B cell (primary cell): ENCODE measurements at regions of chr3 and their contacts with region 1.

Region 1: DNA sequence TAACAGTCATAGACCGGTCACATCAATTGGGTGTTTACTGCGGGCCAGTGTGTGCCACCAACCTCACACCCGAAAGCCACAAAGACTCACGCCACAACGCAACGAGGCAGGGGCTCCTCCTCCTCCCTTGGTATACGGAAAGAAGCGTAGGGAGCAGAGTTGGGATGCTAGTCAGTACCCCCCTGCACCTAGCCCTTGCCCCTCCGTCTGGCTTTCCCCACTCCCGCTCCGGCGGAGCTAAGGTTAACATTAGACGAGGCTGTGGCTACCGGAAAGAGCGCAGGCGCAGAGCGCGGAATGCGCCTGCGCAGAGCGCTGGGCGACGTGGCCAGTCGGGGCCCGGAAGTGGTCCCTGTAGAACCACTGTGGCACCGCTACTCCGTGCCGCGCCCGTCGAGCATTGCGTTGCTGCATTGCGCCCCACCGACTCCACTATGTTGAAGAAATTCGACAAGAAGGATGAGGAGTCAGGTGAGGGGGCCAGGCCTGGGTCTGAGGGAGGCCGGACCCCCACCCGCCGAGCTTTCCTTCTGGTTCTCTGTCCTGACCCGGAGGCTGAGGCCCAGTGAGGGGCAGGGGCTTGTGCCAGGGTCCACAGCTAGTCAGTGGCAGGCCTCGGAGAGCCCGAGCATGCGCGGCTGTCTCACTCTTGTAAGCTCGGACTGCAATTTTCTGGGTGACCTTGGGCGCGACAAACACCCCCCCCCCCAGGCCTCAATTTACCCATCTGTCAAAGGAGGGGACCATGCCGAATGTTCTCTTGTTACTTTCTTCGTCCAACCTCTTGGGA is at the start of gene COPG1:
- DNase-seq: peak; percentile 92
- ATAC-seq: peak; percentile 85
- H3K4me3 ChIP-seq: peak within 1 kb of the TSS; percentile 88 to 99 (median 95)
- H3K4me3 Mint-ChIP-seq: peak within 1 kb of the TSS; percentile 95
- H3K27ac ChIP-seq: peak within 1 kb of the TSS; percentile 64 to 79
- H3K27ac Mint-ChIP-seq: peak within 1 kb of the TSS; percentile 94
- H3K4me1 ChIP-seq: peaks cover 16 to 29% of the 10 kb centered on the region in 2 donors
- H3K4me1 Mint-ChIP-seq: peaks cover 26% of the 10 kb centered on the region
- H3K27me3 ChIP-seq: no peaks in the 10 kb centered on the region
- H3K27me3 Mint-ChIP-seq: no peaks in the 10 kb centered on the region
- CTCF ChIP-seq: no peak
- total RNA-seq, gene COPG1: 85.9 and 87.6 TPM in 2 replicates

Region 2: DNA sequence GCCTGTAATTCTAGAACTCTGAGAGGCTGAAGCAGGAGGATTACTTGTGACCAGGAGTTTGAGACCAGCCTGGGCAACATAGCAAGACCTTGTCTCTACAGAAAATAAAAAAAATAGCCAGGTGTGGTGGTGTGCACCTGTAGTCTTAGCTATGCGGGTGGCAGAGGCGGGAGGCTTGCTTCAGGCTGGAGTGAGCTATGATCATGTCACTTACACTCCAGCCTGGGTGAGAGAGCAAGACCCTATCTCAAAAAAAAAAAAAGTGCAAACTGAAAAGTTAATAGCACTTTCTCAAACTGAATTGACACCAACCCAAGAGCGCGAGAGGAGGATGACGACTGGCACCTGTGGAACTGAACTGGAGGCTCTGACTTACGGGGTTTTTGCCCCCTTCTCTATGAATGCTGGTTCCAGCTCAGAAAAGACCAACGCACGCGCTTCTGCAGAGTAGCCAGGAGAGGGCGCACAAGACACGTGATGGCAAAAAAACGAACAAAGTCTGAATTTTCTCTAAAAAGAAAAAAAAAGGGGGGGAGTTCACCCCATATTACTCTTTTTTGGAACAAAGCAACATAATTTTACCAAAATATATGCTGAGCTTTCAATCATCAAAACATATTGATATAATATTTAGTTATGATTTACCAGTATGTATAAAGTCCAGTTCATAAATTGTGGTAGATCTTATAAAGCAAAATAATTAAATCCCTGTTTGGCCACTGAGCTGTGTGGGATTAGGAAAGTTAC is 279.3 kb before region 1 on chr3:
- CTCF ChIA-PET with region 1: interaction called, 128 read pairs
- POLR2A ChIA-PET with region 1: interaction called, 5 read pairs
- intact Hi-C with region 1: loop called (anchors 1 kb)
- DNase-seq: peak; percentile 80
- ATAC-seq: peak; percentile 64
- H3K4me3 ChIP-seq: no peak overlapping the region
- H3K4me3 Mint-ChIP-seq: no peak overlapping the region
- H3K27ac ChIP-seq: no peak overlapping the region
- H3K27ac Mint-ChIP-seq: no peak overlapping the region
- H3K4me1 ChIP-seq: peaks cover 14 to 15% of the 10 kb centered on the region in 2 donors
- H3K4me1 Mint-ChIP-seq: peaks cover 11% of the 10 kb centered on the region
- H3K27me3 ChIP-seq: no peaks in the 10 kb centered on the region
- H3K27me3 Mint-ChIP-seq: peaks cover 4% of the 10 kb centered on the region
- CTCF ChIP-seq: peak; percentile 97

Region 3: GRCh38 chr3:128992926-128993460 is 256.5 kb before region 1 on chr3:
- CTCF ChIA-PET with region 1: no interaction called
- POLR2A ChIA-PET with region 1: no interaction called
- intact Hi-C with region 1: no loop called
- DNase-seq: no peak
- ATAC-seq: no peak
- H3K4me3 ChIP-seq: no peak overlapping the region
- H3K4me3 Mint-ChIP-seq: peak overlapping the region; percentile 73
- H3K27ac ChIP-seq: no peak overlapping the region
- H3K27ac Mint-ChIP-seq: peak overlapping the region; percentile 37
- H3K4me1 ChIP-seq: peaks cover 20 to 27% of the 10 kb centered on the region in 2 donors
- H3K4me1 Mint-ChIP-seq: peaks cover 16% of the 10 kb centered on the region
- H3K27me3 ChIP-seq: peaks cover 0 to 26% (median 9%) of the 10 kb centered on the region in 4 experiments
- H3K27me3 Mint-ChIP-seq: peaks cover 8% of the 10 kb centered on the region
- CTCF ChIP-seq: no peak

Region 4: GRCh38 chr3:129026728-129027543 is 222.5 kb before region 1 on chr3:
- CTCF ChIA-PET with region 1: interaction called, 12 read pairs
- POLR2A ChIA-PET with region 1: no interaction called
- intact Hi-C with region 1: loop called (anchors 1 kb)
- DNase-seq: peak; percentile 95
- ATAC-seq: peak; percentile 98
- H3K4me3 ChIP-seq: peak overlapping the region; percentile 30 to 71 (median 61)
- H3K4me3 Mint-ChIP-seq: peak overlapping the region; percentile 91
- H3K27ac ChIP-seq: peak overlapping the region; percentile 74 to 83
- H3K27ac Mint-ChIP-seq: peak overlapping the region; percentile 95
- H3K4me1 ChIP-seq: peaks cover 13 to 15% of the 10 kb centered on the region in 2 donors
- H3K4me1 Mint-ChIP-seq: peaks cover 22% of the 10 kb centered on the region
- H3K27me3 ChIP-seq: peaks cover 0 to 6% (median 0%) of the 10 kb centered on the region in 4 experiments
- H3K27me3 Mint-ChIP-seq: peaks cover 3% of the 10 kb centered on the region
- CTCF ChIP-seq: peak; percentile 91

Region 5: DNA sequence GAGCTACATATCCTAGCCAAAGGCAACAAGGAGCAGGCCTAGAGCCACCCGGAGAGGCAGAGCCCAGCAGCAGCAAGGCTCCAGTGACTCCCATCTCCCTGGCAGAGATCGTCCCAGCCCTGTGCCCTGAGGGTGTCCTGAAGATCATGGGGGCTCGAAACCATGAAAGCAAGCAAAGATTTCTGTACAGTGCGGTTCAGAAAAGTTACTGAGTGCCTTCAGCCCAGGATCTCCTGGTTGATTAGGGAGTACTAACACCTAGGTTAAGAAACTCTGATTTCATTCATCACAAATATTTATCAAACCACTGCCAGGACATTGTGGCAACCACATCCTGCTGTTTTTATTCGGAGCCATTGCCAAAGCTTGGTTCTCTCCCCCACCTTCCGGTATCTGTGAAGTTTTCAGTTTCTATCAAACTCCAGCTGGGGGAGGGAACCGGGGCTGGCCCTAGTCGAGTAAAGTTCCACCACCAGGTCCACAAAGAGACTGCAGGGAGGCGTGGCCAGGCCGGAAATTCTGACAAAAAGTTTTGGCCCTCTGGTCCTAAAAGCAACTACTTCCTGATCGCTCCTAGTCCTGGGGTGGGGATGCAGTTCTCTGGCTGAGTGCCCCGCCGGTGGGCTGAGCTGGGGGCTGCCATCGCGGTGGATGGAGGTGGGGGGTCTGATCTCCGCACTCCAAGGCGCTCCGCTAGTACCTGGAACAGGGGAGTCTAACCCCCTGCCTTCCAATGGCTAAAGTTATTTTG is 129.0 kb before region 1 on chr3:
- CTCF ChIA-PET with region 1: interaction called, 26 read pairs
- POLR2A ChIA-PET with region 1: interaction called, 7 read pairs
- intact Hi-C with region 1: loop called (anchors 5 kb)
- DNase-seq: peak; percentile 93
- ATAC-seq: peak; percentile 61
- H3K4me3 ChIP-seq: peak overlapping the region; percentile 68 to 81 (median 76)
- H3K4me3 Mint-ChIP-seq: peak overlapping the region; percentile 88
- H3K27ac ChIP-seq: peak overlapping the region; percentile 61 to 62
- H3K27ac Mint-ChIP-seq: peak overlapping the region; percentile 84
- H3K4me1 ChIP-seq: peaks cover 42 to 46% of the 10 kb centered on the region in 2 donors
- H3K4me1 Mint-ChIP-seq: peaks cover 53% of the 10 kb centered on the region
- H3K27me3 ChIP-seq: no peaks in the 10 kb centered on the region
- H3K27me3 Mint-ChIP-seq: no peaks in the 10 kb centered on the region
- CTCF ChIP-seq: peak; percentile 30

Region 6: DNA sequence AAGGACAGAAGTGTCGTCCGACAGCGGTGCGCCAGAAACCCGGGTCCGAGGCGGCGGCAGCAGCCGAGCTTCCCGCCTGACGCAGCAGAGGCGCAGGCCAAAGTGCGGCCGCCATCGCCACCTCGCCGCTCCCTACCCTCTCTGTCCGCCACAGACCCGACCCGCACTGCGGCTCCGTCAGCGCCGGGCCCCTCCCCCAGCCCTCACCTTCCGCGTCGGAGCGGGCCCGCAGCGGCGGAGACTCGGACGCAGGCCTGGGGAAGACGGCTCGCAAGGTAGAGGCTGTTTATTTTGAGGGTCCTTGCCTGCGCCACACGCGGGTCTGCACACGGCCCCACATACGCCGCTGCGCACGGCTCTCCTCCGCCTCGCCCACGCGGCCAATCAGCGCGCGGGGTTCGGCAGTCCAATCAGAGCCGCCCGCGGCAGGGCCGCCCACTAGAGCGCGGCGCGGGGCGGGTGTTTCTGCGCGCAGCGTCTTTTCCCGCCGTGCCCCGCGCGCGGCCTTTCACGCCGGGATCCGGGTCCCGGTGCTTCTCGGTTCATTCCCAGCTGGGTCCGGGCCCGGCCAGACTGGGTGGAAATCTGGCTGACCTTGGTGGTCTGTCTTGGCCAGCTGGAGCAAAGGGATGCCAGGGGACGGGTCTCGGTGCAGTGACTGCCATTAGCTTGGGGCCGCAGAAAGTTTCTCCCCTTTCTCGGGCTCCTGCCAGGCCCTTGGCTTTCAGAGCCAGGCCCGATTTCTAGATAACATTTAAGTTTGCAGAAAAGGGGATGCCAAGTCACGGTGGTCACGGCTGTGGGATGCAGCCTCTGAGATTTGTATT is 65.7 kb before region 1 on chr3 and contains the start of gene CNBP:
- CTCF ChIA-PET with region 1: interaction called, 39 read pairs
- POLR2A ChIA-PET with region 1: interaction called, 8 read pairs
- intact Hi-C with region 1: loop called (anchors 1 kb)
- DNase-seq: peak; percentile 95
- ATAC-seq: peak; percentile 97
- H3K4me3 ChIP-seq: peak within 1 kb of the TSS; percentile 71 to 100 (median 98)
- H3K4me3 Mint-ChIP-seq: peak within 1 kb of the TSS; percentile 89
- H3K27ac ChIP-seq: peak within 1 kb of the TSS; percentile 90 to 92
- H3K27ac Mint-ChIP-seq: peak within 1 kb of the TSS; percentile 99
- H3K4me1 ChIP-seq: peaks cover 23 to 52% of the 10 kb centered on the region in 2 donors
- H3K4me1 Mint-ChIP-seq: peaks cover 44% of the 10 kb centered on the region
- H3K27me3 ChIP-seq: no peaks in the 10 kb centered on the region
- H3K27me3 Mint-ChIP-seq: no peaks in the 10 kb centered on the region
- CTCF ChIP-seq: no peak
- total RNA-seq, gene CNBP: 294 and 304 TPM in 2 replicates

Region 7: GRCh38 chr3:129233538-129233937 is 15.9 kb before region 1 on chr3:
- CTCF ChIA-PET with region 1: interaction called, 98 read pairs
- POLR2A ChIA-PET with region 1: interaction called, 18 read pairs
- intact Hi-C with region 1: loop called (anchors 1 kb)
- DNase-seq: peak; percentile 95
- ATAC-seq: peak; percentile 94
- H3K4me3 ChIP-seq: no peak overlapping the region
- H3K4me3 Mint-ChIP-seq: peak overlapping the region; percentile 50
- H3K27ac ChIP-seq: peak overlapping the region; percentile 71 to 87
- H3K27ac Mint-ChIP-seq: peak overlapping the region; percentile 97
- H3K4me1 ChIP-seq: peaks cover 28 to 36% of the 10 kb centered on the region in 2 donors
- H3K4me1 Mint-ChIP-seq: peaks cover 47% of the 10 kb centered on the region
- H3K27me3 ChIP-seq: no peaks in the 10 kb centered on the region
- H3K27me3 Mint-ChIP-seq: no peaks in the 10 kb centered on the region
- CTCF ChIP-seq: no peak

Region 8: DNA sequence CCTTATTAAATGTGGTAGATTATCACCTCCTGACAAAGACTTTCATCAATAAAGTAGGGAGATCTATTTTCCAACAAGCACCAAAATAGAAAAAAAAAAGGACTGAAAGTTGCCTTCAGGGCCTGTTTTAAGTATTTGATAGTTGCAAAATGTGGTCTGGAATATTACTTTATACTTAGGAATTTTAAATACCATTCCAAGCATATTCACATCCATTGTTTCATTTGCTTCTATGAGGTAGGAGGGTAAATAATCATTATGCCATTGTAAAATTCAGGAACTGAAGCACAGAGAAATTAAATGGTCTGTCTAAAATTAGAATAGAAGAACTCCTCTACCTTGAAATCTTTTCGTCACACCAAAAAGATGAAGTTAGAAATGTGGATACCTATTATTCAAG is 534.0 kb after region 1 on chr3:
- CTCF ChIA-PET with region 1: no interaction called
- POLR2A ChIA-PET with region 1: no interaction called
- intact Hi-C with region 1: no loop called
- DNase-seq: no peak
- ATAC-seq: no peak
- H3K4me3 ChIP-seq: no peak overlapping the region
- H3K4me3 Mint-ChIP-seq: no peak overlapping the region
- H3K27ac ChIP-seq: no peak overlapping the region
- H3K27ac Mint-ChIP-seq: no peak overlapping the region
- H3K4me1 ChIP-seq: no peaks in the 10 kb centered on the region
- H3K4me1 Mint-ChIP-seq: peaks cover 2% of the 10 kb centered on the region
- H3K27me3 ChIP-seq: no peaks in the 10 kb centered on the region
- H3K27me3 Mint-ChIP-seq: no peaks in the 10 kb centered on the region
- CTCF ChIP-seq: no peak